IMR-90 (cell line): ENCODE measurements at regions of chr16 and their contacts with region 1.

Region 1: DNA sequence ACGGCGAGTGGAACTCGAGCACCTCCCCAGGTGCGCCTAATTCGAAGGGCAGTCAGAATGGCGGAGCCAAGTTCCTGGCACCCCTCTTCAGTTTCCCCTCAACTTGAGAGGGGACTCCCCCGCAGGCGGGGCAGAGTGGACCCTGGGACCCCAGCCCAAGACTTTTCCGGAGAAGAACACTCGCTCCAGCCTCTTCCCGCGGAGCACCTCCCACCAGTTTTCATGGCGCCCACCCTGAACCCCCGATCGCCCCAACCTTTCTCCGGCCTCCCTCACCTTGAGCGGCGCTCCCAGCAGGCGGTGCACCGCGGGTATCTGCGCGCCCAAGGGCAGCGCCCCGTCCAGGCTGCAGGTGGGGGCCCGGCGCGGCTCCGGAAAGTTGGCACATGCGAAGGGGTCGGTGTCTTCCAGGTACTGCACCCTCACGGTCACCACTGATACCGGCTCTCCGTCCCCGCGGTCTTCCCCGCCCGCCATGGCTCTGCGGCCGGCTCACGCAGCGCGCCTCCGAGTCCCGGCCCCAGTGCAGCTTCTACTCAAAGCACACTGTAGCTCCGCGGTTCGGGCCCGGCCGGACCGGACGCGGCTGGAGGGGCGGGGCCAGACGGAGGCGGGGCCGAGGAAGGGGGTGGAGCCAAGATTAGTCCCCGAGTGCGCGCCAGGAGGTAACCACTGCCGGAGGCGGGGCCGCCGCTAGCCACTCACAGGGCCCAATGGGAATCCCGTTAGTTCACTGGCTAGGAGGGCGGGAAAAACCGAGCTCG is at the start of gene FHOD1:
- DNase-seq: peak; percentile 92
- ATAC-seq: peak; percentile 75
- H3K4me3 ChIP-seq: peak within 1 kb of the TSS; percentile 89
- H3K27ac ChIP-seq: peak within 1 kb of the TSS; percentile 88
- H3K4me1 ChIP-seq: peaks cover 43% of the 10 kb centered on the region
- H3K27me3 ChIP-seq: no peaks in the 10 kb centered on the region
- CTCF ChIP-seq: no peak
- POLR2A ChIP-seq: peak; percentile 89
- RAD21 ChIP-seq: no peak
- total RNA-seq, gene FHOD1: 13.1 and 13.8 TPM in 2 replicates

Region 2: DNA sequence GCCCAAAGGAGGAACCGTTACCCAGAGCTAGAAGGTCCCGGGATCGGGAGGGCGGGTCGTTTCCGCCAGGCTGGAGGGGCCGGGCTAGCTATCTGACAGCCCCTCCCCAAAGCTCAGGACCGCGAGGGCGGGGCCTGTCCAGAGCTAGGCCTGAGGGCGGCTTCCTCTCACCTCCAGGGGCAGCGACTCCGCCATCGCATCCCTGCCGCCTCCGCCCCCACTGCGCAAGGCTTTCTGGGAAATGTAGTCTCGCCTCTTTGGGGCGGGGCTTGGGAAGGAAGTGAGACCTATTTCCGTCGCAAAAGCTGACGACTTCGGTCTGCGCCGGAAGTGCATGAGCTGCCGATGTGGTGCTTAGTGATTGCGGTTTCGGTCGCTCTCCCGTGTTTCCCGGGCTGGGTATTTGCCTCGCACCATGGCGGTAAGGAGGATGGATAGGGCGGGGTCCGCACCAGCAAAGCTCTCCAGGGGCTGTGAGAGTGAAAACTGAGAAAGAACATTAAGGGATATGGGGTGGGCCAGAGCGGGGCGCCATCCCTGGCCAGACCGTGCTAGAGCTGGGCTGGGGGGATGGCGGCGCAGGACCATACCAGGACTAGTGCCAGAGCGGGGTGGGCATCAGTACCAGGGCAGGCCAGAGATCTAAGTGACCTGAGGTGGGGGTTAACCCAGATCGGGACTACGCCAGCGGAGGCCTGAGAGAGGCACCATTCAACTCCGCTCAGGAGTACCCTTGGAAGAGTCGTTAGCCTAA is 20.1 kb before region 1 on chr16 and contains the start of gene TMEM208:
- CTCF ChIA-PET with region 1: interaction called, 5 read pairs
- POLR2A ChIA-PET with region 1: no interaction called
- dilution Hi-C with region 1: no loop called
- in situ Hi-C with region 1: no loop called
- intact Hi-C with region 1: loop called (anchors 1 kb)
- DNase-seq: peak; percentile 98
- ATAC-seq: peak; percentile 99
- H3K4me3 ChIP-seq: peak within 1 kb of the TSS; percentile 80
- H3K27ac ChIP-seq: peak within 1 kb of the TSS; percentile 89
- H3K4me1 ChIP-seq: peaks cover 12% of the 10 kb centered on the region
- H3K27me3 ChIP-seq: no peaks in the 10 kb centered on the region
- CTCF ChIP-seq: peak; percentile 29
- POLR2A ChIP-seq: peak; percentile 82
- RAD21 ChIP-seq: peak; percentile 8; the same call in 1 of the 2 replicates
- total RNA-seq, gene TMEM208: 41.7 and 65.6 TPM in 2 replicates

Region 3: DNA sequence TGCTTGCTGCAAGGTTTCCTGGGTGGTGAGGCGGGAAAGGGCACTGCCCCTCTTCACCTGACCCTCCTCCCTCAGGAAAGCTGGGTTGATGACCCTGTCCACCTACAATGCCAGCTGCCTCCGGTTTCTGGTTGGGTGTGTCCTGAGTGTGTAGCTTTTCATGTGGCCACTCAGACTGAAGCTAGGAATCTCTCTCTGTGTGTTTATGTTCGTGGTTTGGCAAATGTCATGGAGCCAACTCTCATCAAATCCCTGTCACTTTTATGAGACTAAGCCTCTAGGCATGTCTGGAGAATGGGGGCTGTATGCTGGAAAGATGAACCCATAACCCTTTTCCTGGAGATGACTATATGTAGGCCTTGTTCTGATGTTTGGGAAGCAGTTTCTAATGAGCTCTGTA is 49.3 kb after region 1 on chr16:
- CTCF ChIA-PET with region 1: no interaction called
- POLR2A ChIA-PET with region 1: no interaction called
- dilution Hi-C with region 1: no loop called
- in situ Hi-C with region 1: no loop called
- intact Hi-C with region 1: no loop called
- DNase-seq: peak; percentile 92
- ATAC-seq: peak; percentile 75
- H3K4me3 ChIP-seq: no peak overlapping the region
- H3K27ac ChIP-seq: 0 out of 2 replicates have a peak overlapping the region, but pooled peaks have one; percentile 1
- H3K4me1 ChIP-seq: peaks cover 28% of the 10 kb centered on the region
- H3K27me3 ChIP-seq: no peaks in the 10 kb centered on the region
- CTCF ChIP-seq: no peak
- POLR2A ChIP-seq: no peak
- RAD21 ChIP-seq: no peak; the same call in 1 of the 2 replicates

Region 4: DNA sequence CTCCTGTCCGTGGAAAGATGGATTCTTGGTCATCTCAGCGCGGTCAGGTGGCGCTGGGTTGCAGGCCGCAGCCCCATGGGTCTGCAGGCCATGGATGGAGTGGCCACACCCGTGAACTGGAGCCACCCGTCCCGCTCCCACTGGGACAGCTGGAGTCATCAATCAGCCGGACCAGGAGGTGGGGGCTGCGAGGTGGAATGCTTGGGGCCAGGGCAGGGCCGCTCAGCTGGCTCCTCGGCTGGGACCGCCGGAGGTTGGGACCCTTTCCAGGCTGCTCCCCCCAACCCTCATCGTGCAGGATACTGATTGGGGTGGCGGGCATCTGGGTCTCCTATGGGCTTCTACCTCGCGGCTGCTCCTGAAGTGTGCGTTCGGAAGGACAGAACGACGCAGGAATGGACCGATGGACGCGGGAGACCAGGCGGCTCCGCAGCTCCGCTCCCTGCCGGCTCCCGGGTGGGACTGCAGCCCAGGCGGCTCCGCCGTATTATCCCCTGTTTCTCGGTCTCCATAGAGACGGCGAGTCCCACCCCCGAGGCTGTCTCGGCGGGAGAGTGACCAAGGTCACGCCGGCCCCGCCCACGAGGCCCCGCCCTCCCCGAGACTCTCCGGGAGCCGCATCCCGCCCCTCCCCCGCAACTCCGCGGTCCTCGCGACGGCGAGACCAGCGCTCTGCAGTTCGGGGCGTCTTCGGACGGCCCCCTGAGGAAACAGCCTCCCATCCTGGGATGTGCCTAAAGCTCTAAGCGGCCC is 146.1 kb after region 1 on chr16 and contains the start of gene TPPP3:
- CTCF ChIA-PET with region 1: no interaction called
- POLR2A ChIA-PET with region 1: no interaction called
- dilution Hi-C with region 1: no loop called
- in situ Hi-C with region 1: no loop called
- intact Hi-C with region 1: loop called (anchors 5 kb)
- DNase-seq: peak; percentile 76
- ATAC-seq: peak; percentile 90
- H3K4me3 ChIP-seq: peak within 1 kb of the TSS; percentile 33
- H3K27ac ChIP-seq: no peak within 1 kb of the TSS
- H3K4me1 ChIP-seq: peaks cover 16% of the 10 kb centered on the region
- H3K27me3 ChIP-seq: no peaks in the 10 kb centered on the region
- CTCF ChIP-seq: peak; percentile 77
- POLR2A ChIP-seq: no peak
- RAD21 ChIP-seq: peak; percentile 66
- total RNA-seq, gene TPPP3: 0.54 and 0.56 TPM in 2 replicates

Region 5: DNA sequence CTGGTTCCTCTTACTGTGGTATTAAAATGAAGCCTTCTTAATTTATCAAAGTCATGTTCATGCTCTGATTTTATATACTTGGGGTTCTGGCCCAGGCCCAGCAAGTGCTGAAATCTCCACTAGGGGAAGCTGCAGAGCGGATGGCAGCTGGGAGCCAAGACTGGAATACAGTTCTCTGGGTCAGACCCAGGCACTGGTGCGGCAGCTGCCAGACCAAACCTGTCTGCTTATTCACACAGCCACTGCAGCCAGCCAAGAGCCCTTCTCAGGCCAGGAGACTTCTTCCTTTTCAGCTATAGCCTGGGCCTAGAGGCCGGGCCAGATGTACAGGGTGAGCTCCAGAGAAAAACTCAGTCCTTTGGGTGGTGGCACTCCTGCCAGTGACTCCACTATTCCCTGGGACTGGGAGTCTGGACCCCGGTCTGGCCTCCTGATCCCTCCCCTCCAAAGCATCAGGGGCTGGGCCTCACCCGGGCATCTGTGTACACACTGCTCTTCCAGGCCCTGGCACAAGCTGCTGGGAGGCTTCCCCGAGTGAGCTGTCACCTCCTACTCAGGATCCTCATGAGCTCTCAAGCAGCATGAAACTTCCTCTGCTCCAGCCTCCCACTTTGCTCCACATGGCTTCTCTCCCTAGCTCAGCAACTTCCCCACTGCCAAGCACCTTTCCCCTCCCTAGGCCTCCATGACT is 209.4 kb after region 1 on chr16:
- CTCF ChIA-PET with region 1: no interaction called
- POLR2A ChIA-PET with region 1: interaction called, 3 read pairs
- dilution Hi-C with region 1: no loop called
- in situ Hi-C with region 1: loop called (anchors 10 kb)
- intact Hi-C with region 1: no loop called
- DNase-seq: peak; percentile 36
- ATAC-seq: peak; percentile 36
- H3K4me3 ChIP-seq: no peak overlapping the region
- H3K27ac ChIP-seq: no peak overlapping the region
- H3K4me1 ChIP-seq: peaks cover 27% of the 10 kb centered on the region
- H3K27me3 ChIP-seq: no peaks in the 10 kb centered on the region
- CTCF ChIP-seq: peak; percentile 50
- POLR2A ChIP-seq: no peak
- RAD21 ChIP-seq: peak; percentile 9; the same call in 1 of the 2 replicates

Region 6: GRCh38 chr16:67653128-67653786 is 406.1 kb after region 1 on chr16:
- CTCF ChIA-PET with region 1: no interaction called
- POLR2A ChIA-PET with region 1: no interaction called
- dilution Hi-C with region 1: no loop called
- in situ Hi-C with region 1: no loop called
- intact Hi-C with region 1: no loop called
- DNase-seq: no peak
- ATAC-seq: peak; percentile 58
- H3K4me3 ChIP-seq: peak overlapping the region; percentile 51
- H3K27ac ChIP-seq: no peak overlapping the region; the same call in 1 of the 2 replicates
- H3K4me1 ChIP-seq: peaks cover 4% of the 10 kb centered on the region; the same call in 1 of the 2 replicates
- H3K27me3 ChIP-seq: peaks cover 42% of the 10 kb centered on the region
- CTCF ChIP-seq: peak; percentile 22; the same call in 1 of the 2 replicates
- POLR2A ChIP-seq: peak; percentile 35; the same call in 1 of the 2 replicates
- RAD21 ChIP-seq: no peak